ENCODE measurements at regions of chr1 and their contacts with region 1.

Region 1: DNA sequence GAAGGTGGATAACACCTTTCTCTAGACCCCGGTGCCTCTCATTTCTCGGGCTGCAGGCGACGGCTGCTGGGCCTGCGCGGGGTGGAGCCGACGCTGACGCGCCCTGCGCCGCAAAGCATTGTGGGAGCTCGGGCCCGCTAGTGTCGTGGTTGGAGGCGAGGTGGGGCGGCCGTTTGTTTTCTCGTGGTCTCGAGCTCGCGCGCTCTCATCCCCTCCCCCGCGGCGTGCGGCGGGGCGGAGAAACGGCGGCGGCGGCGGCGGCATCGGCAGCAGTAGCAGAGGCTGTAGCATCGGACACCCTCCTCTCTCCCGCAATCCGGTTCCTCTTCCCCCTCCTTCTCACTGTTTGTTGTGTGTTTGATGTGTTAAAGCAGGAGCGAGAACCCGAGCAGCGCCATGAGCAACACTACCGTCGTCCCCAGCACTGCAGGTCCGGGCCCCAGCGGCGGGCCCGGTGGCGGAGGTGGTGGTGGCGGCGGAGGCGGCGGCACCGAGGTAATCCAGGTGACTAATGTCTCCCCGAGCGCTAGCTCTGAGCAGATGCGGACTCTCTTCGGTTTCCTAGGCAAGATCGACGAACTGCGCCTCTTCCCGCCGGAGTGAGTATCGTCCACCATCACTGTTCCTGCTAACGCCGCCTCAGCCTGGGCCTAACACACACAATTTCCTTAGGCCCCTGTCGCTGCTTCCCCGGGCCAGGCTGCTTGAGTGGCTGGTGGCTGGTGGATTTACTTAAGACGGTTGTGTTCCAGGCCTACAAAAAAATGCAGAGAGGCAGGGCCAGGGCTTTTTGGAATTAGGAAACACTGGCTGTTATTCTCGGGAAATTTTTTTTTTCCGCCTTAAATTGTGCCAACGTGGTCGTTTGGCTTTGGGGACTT is at the start of gene SRSF11:
- DNase-seq: peak; percentile 96 to 97
- H3K4me3 ChIP-seq: peak within 1 kb of the TSS; percentile 55 to 86 (median 73)
- H3K27ac ChIP-seq: peak within 1 kb of the TSS; percentile 85 to 94 (median 93)
- H3K4me1 ChIP-seq: peaks cover 9 to 21% of the 10 kb centered on the region in 2 donors
- H3K27me3 ChIP-seq: no peaks in the 10 kb centered on the region
- CTCF ChIP-seq: peak in 2 of 6 experiments; percentile 6 to 17
- POLR2A ChIP-seq: peak in 1 of 2 donors; percentile 86
- total RNA-seq, gene SRSF11: 139 to 325 (median 258) TPM

Region 2: GRCh38 chr1:70143048-70143659 is 78.3 kb before region 1 on chr1:
- intact Hi-C with region 1: no loop called
- DNase-seq: no peak
- H3K4me3 ChIP-seq: no peak overlapping the region
- H3K27ac ChIP-seq: no peak overlapping the region
- H3K4me1 ChIP-seq: no peaks in the 10 kb centered on the region
- H3K27me3 ChIP-seq: no peaks in the 10 kb centered on the region
- CTCF ChIP-seq: no peak
- POLR2A ChIP-seq: no peak

Region 3: DNA sequence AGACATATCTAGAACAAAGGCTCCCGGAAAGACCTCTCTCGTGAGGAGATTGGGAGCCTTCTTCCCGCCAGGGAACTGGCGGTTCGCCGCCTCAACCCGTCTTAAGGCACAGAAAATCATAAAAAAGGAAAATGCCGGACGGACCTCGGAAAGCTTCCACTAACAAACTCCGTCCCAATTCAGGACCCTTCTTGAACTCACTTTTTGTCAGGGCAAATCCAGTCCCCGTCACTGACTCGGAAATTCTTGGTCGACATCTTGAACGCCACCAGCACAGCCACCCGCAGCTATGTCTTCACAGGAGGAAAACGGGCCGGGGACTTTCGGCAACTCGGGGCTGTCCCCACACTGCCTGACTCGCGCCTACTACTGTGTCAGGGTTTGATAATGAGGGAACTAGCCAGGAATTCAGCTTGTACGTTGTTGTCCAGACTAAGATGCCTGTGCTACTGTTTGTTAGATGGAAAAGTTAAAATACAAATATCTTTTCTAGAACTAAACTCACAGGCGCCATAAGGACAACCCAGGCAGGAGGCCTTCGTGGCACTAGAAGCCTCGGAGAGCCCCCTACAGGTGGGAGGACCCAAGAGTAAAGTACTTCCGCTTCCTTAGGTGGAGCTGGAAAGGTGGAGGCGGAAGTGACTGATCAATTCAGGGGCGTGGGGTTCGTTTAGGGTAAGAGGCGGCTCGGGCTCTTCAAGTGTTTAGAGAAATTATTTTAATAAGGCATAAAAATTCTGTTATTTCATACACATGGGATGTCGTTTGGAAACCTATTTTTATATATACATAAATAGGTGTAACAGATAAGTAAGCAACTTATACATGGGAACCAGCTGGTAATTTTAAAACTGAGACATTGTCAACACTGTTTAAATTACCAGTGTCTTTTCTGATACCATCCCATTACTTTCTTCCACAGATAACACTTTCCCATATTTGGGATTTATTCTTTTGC is 859.5 kb after region 1 on chr1 and contains the start of gene ZRANB2:
- intact Hi-C with region 1: loop called (anchors 10 kb)
- DNase-seq: peak; percentile 90 to 91
- H3K4me3 ChIP-seq: peak within 1 kb of the TSS; percentile 77 to 95 (median 83)
- H3K27ac ChIP-seq: peak within 1 kb of the TSS; percentile 86 to 92 (median 90)
- H3K4me1 ChIP-seq: peaks cover 19 to 23% of the 10 kb centered on the region in 2 donors
- H3K27me3 ChIP-seq: no peaks in the 10 kb centered on the region
- CTCF ChIP-seq: peak in 5 of 6 experiments; percentile 21 to 50 (median 47)
- POLR2A ChIP-seq: peak in 1 of 2 donors; percentile 79
- total RNA-seq, gene ZRANB2: 67.3 to 125 (median 93.7) TPM